ENCODE measurements at regions of chr9 and their contacts with region 1.

Region 1: GRCh38 chr9:80699511-80699998 is 989.8 kb downstream of the TLE1 start:
- DNase-seq: no peak
- ATAC-seq: no peak
- H3K4me3 ChIP-seq: no peak overlapping the region
- H3K4me3 Mint-ChIP-seq: no peak overlapping the region
- H3K27ac ChIP-seq: no peak overlapping the region
- H3K27ac Mint-ChIP-seq: no peak overlapping the region
- H3K4me1 ChIP-seq: no peaks in the 10 kb centered on the region
- H3K4me1 Mint-ChIP-seq: no peaks in the 10 kb centered on the region
- H3K27me3 ChIP-seq: no peaks in the 10 kb centered on the region
- H3K27me3 Mint-ChIP-seq: no peaks in the 10 kb centered on the region

Region 2: DNA sequence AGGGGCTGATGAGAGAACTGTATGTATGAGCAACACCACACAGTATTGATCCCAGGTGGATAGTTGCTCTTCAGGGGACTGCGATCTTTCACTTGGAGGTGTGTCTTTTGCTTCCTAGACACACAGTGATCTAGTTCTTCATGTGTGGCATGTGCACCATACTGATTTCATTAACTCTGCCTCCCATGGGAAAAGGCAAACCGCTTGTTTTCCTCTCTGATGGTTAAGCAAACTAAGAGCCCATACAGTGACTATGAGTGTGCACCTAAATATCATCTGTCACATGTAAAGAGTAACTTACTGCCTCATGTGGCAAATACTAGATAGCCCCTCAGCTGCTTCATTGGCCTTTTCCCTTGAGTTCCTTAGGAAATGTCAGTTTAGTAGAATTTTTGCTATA is 980.5 kb before region 1 on chr9:
- CTCF ChIA-PET with region 1: no interaction called
- POLR2A ChIA-PET with region 1: no interaction called
- DNase-seq: no peak
- ATAC-seq: no peak
- H3K4me3 ChIP-seq: no peak overlapping the region
- H3K4me3 Mint-ChIP-seq: no peak overlapping the region
- H3K27ac ChIP-seq: no peak overlapping the region
- H3K27ac Mint-ChIP-seq: no peak overlapping the region
- H3K4me1 ChIP-seq: no peaks in the 10 kb centered on the region
- H3K4me1 Mint-ChIP-seq: no peaks in the 10 kb centered on the region
- H3K27me3 ChIP-seq: no peaks in the 10 kb centered on the region
- H3K27me3 Mint-ChIP-seq: no peaks in the 10 kb centered on the region

Region 3: DNA sequence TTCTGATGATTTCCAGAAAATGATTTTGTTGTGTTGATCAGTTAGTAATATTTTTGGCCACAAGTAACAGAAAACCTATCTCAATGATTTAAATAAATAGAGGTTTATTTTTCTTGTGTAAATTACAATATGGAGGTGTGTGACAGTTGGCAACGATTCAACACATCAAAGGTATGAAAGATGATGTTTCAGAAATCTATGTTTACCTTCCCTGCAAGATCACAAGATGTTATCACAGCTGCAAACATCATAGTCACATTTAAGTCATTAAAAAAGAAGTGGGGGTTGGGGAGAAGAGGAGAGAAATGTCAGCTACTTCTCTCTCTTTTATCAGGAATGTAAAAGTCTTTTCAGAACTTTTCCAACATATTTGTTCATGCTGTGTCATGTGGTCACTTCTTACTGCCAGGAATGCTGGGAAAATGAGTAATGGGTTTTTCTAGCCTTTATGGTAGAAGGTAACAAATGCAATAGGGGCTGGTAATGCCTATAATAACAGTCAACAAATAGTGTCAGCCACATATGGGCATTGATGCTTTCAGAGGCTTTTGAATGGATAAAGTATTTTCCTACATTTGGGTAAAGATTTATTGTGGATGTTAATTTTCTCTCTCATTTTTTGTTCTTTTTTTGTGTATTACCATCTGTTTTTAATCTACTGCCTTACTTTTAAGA is 247.1 kb after region 1 on chr9:
- CTCF ChIA-PET with region 1: no interaction called
- POLR2A ChIA-PET with region 1: interaction called in 1 of 2 experiments, 15 read pairs
- DNase-seq: no peak
- ATAC-seq: no peak
- H3K4me3 ChIP-seq: no peak overlapping the region
- H3K4me3 Mint-ChIP-seq: no peak overlapping the region
- H3K27ac ChIP-seq: no peak overlapping the region
- H3K27ac Mint-ChIP-seq: no peak overlapping the region
- H3K4me1 ChIP-seq: no peaks in the 10 kb centered on the region
- H3K4me1 Mint-ChIP-seq: no peaks in the 10 kb centered on the region
- H3K27me3 ChIP-seq: no peaks in the 10 kb centered on the region
- H3K27me3 Mint-ChIP-seq: no peaks in the 10 kb centered on the region